Activated B cell treated with CpG ODN at 0.5 μM for 24 hours (primary cell): ENCODE measurements at regions of chr1 and their contacts with region 1.

Region 1: DNA sequence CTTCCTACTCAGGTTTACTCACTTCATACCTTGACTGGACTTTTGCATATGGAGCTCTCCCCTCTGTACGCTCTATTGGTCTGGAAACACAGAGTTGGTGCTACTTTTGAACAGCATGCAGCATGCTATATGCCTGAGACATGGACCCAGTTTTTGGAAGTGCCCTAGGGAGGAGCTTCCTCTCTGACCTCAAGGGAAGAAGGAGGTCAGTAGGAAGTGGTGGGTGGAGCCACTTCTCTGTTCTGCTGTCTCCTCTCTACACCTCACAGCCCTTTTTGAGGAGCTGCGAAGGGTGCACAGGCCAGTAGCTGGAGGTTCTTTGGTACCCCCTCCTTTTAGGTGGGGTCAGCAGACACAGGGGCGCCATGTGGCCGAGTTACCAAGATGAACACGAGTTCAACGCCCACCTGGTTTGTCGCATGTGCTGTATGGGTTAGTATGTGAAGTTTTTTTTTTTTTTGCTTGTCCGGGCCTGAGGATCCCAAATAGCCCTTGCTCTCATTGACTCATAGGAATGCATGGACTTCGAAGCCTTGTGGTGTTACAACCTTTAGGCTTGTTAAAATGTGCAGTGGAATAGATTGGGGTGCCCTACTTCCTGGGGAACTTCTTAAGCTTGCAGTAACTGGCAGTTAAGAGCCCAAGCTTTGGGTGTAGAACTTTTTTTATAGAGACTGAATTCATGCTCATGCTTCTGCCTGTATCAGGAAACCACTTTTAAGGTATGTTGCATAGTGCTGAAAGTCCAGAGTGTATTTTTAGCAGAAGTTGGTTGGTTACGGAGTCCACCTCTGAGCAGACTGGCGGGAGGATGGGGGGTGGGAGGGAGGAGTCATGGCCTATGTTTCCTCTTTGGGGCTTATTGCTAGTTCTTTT is 10.7 kb downstream of the MACF1 start:
- DNase-seq: peak; percentile 20
- ATAC-seq: peak; percentile 83
- H3K4me3 Mint-ChIP-seq: peak overlapping the region; percentile 84
- H3K27ac Mint-ChIP-seq: peak overlapping the region; percentile 83
- H3K4me1 Mint-ChIP-seq: peaks cover 55% of the 10 kb centered on the region
- H3K27me3 Mint-ChIP-seq: no peaks in the 10 kb centered on the region
- CTCF ChIP-seq: no peak

Region 2: DNA sequence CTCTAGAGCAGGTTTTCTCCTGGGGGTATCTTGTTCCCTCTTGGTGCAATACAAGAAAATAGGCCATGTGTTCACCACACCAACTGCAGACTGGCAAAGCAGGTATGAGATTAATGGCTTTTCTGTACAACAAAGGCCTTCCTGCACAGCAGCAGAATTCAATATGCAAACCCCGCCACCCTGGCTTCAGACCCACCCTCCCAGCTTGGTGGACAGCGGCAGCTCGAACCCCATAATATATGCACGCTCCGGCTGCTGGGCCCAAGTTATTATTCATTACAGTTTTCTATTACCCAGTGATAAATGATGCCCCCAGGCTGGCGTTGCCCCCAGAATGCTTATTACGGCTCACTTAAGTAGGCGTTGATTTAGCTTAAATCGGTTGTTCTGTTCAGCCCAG is 499.8 kb before region 1 on chr1:
- CTCF ChIA-PET with region 1: no interaction called
- POLR2A ChIA-PET with region 1: no interaction called
- intact Hi-C with region 1: no loop called
- DNase-seq: no peak
- ATAC-seq: no peak
- H3K4me3 Mint-ChIP-seq: no peak overlapping the region
- H3K27ac Mint-ChIP-seq: no peak overlapping the region
- H3K4me1 Mint-ChIP-seq: no peaks in the 10 kb centered on the region
- H3K27me3 Mint-ChIP-seq: peaks cover 11% of the 10 kb centered on the region
- CTCF ChIP-seq: no peak

Region 3: GRCh38 chr1:38741341-38741740 is 473.9 kb before region 1 on chr1:
- CTCF ChIA-PET with region 1: no interaction called
- POLR2A ChIA-PET with region 1: no interaction called
- intact Hi-C with region 1: no loop called
- DNase-seq: no peak
- ATAC-seq: no peak
- H3K4me3 Mint-ChIP-seq: no peak overlapping the region
- H3K27ac Mint-ChIP-seq: no peak overlapping the region
- H3K4me1 Mint-ChIP-seq: no peaks in the 10 kb centered on the region
- H3K27me3 Mint-ChIP-seq: no peaks in the 10 kb centered on the region
- CTCF ChIP-seq: no peak

Region 4: GRCh38 chr1:39204441-39205081 is 10.7 kb before region 1 on chr1 and contains the start of gene MACF1:
- CTCF ChIA-PET with region 1: interaction called, 3 read pairs
- POLR2A ChIA-PET with region 1: interaction called, 17 read pairs
- intact Hi-C with region 1: loop called (anchors 1 kb)
- DNase-seq: no peak
- ATAC-seq: no peak
- H3K4me3 Mint-ChIP-seq: peak within 1 kb of the TSS; percentile 70
- H3K27ac Mint-ChIP-seq: peak within 1 kb of the TSS; percentile 61
- H3K4me1 Mint-ChIP-seq: peaks cover 31% of the 10 kb centered on the region
- H3K27me3 Mint-ChIP-seq: no peaks in the 10 kb centered on the region
- CTCF ChIP-seq: no peak
- total RNA-seq, gene MACF1: 235 and 286 TPM in 2 replicates

Region 5: DNA sequence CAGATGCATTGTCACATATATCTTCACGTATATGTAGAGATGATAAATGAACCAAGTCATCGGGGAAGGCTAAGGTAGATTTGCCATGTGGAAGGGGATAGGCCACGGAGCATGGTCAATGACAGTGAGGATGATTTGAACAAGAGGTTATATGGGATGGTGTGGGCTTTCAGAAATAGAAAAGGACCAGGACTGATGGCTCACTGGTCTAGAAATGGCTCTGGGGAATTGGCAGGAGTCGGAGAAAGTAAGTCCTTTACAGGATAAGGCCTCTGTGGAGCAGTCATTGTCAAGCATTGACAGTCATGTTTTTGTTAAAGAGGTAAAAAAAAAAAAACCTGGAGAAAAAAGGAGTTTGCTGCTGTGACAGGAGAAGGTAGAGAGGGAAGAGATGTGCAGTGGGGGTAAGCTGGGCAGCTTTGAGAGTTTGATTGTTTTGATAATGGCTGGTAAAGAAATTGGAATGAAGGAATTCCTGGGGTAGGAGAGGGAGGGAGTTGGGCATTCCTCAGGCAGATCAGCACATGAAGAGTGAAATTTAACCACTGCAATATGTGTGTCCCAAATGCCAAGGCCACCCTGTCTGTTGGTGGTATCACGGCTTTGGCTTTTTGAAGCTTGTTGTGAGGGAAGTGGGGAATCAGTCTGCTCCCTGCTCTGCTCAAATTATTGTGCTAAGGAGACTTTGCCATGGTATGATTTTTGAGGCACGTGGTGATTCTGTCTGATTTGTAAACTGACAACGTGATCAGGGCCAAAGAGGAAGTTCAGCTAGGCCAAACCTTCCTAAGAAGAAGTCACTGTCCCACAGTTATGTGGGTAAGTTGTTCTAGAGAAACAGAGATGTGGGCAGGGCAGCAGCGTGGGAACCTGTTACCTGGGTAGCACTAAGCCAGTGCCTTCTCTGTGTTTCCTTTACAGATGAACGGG is 15.3 kb after region 1 on chr1:
- CTCF ChIA-PET with region 1: no interaction called
- POLR2A ChIA-PET with region 1: interaction called, 4 read pairs
- intact Hi-C with region 1: loop called (anchors 2 kb)
- DNase-seq: peak; percentile 24
- ATAC-seq: peak; percentile 86
- H3K4me3 Mint-ChIP-seq: peak overlapping the region; percentile 36
- H3K27ac Mint-ChIP-seq: peak overlapping the region; percentile 85
- H3K4me1 Mint-ChIP-seq: peaks cover 47% of the 10 kb centered on the region
- H3K27me3 Mint-ChIP-seq: no peaks in the 10 kb centered on the region
- CTCF ChIP-seq: no peak